HEK293 (cell line): ENCODE measurements at regions of chr2 and their contacts with region 1.

Region 1: DNA sequence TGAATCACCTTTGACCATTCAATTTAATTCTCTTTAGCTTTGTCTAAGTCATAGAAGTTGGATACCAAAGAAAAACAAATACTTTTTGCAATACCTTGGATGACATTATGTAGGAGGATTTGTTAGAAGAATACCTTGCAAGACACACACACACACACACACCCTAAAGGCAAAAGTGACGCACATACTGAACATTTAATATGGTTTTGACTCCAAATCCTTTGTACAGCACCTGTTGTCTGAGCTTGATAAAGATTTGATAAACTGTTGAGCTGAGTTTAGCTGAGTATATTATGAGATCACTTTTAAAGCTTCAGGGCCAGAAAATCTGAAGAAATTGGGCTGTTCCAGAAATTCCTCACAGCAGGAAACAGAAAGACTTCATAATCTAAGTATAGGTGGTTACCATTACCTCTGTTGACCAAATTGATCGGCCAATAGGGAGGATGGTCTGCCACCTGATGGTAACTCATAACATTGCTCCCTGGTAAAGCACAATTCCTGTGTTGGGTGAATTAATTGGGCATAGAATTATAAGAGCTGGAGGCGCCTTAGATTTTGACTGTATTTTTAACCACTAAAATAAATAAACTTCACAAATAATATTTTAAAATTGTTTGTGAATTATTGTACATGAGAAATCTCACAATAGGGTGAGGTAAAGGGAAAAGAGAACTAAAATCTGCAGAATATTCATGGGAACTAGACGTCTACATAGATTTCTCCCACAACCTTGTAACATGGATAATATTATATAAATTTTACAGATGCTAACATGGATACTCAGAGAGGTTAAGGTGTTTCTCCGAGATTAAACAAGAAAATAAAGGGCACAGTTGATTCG is 21.9 kb upstream of the RPIA start:
- H3K4me3 ChIP-seq: no peak overlapping the region
- H3K27ac ChIP-seq: no peak overlapping the region
- H3K4me1 ChIP-seq: no peaks in the 10 kb centered on the region
- CTCF ChIP-seq: peak; percentile 27; the same call in 1 of the 2 replicates

Region 2: DNA sequence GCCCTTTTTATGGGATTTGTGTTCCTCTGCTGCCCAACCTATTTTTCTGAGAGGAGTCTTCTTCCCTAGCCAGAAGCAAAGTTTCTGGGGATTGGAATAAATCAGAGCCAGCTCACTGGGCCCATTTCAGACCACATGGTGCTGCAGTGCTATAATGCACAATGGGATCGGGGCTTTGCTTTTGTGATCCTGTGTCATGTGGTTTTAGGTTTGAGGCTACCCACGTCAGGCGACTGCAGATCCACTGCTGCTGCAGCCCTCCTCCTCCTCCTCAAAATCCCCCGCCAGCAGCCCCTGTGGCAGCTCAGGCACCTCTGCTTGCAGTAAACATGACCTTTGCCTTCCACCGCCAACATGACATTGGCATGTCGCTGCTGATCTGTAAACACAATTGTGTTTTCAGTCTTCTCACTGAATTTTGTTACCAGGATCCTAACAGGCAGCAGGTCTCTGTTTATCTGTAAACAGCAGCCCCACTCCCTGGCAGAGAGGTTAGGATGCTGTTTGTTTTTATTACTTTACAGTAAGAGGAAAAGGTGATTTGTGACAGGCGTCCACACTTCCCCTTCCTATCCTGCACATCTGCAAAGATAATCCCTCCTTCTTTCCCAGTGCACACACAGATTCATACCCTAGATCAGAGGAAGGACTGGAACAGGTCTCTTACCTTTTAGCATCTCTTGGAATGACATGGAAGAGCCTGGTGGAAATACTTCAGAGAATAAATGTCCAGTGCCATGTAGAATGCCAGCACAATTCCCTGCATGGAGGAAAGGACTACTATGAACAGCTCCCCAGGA is 347.9 kb before region 1 on chr2:
- CTCF ChIA-PET with region 1: no interaction called
- POLR2A ChIA-PET with region 1: no interaction called
- H3K4me3 ChIP-seq: no peak overlapping the region
- H3K27ac ChIP-seq: no peak overlapping the region
- H3K4me1 ChIP-seq: no peaks in the 10 kb centered on the region
- CTCF ChIP-seq: no peak

Region 3: GRCh38 chr2:88429929-88430328 is 239.7 kb before region 1 on chr2:
- CTCF ChIA-PET with region 1: no interaction called
- POLR2A ChIA-PET with region 1: no interaction called
- H3K4me3 ChIP-seq: no peak overlapping the region
- H3K27ac ChIP-seq: no peak overlapping the region
- H3K4me1 ChIP-seq: no peaks in the 10 kb centered on the region
- CTCF ChIP-seq: no peak

Region 4: DNA sequence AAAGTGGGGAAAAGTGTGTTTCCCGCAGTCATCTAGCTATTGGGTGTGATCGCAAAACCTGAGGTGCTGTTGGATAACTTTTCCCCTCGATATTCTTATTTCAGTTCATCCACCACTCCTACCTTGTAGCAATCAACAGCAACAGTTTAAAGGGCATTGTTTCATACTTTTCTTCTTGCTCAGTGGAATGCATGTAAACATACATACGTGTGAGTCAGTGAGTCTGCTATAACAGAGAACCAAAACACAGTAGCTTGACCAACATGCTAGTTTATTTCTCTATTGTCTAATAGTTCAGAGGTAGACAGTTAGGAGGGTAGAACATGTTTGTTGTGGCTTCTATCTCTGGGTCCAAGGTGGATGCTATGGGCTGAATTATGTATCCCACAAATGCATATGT is 139.5 kb before region 1 on chr2:
- CTCF ChIA-PET with region 1: no interaction called
- POLR2A ChIA-PET with region 1: no interaction called
- H3K4me3 ChIP-seq: no peak overlapping the region
- H3K27ac ChIP-seq: no peak overlapping the region
- H3K4me1 ChIP-seq: no peaks in the 10 kb centered on the region
- CTCF ChIP-seq: no peak

Region 5: GRCh38 chr2:88580088-88580487 is 89.5 kb before region 1 on chr2:
- CTCF ChIA-PET with region 1: interaction called, 15 read pairs
- POLR2A ChIA-PET with region 1: no interaction called
- H3K4me3 ChIP-seq: no peak overlapping the region
- H3K27ac ChIP-seq: no peak overlapping the region
- H3K4me1 ChIP-seq: no peaks in the 10 kb centered on the region
- CTCF ChIP-seq: no peak

Region 6: DNA sequence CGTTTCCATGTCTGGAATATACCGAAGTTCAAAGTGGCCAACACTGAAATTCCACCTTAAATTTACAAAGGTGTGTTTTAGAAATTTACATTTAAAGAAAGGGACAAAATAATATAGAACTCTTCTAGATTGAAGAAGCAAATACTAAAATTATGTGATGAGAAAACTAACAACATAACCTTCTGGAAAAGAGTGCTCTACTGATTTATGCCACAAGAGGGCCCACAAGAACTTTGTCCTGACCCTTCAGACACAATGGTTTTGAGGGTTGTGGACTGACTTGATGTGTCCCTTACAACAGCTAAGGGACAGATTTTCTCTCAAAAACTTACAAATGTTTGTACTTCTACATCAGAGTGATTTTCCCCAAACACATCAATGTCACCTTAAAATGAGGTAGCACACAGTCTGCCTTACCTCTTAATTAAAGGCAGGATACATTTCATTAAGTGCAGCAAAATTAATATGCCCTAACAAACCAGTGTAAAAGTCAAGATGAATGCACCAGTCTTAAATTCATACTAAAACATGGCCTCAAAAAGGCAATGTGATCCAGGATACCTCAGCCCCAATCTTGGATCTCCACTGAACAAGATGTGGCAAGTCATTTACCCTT is 78.5 kb before region 1 on chr2:
- CTCF ChIA-PET with region 1: interaction called, 220 read pairs
- POLR2A ChIA-PET with region 1: no interaction called
- H3K4me3 ChIP-seq: no peak overlapping the region
- H3K27ac ChIP-seq: no peak overlapping the region
- H3K4me1 ChIP-seq: no peaks in the 10 kb centered on the region
- CTCF ChIP-seq: 0 out of 2 replicates have a peak, but pooled peaks have one; percentile 11

Region 7: GRCh38 chr2:88659538-88659916 is 10.1 kb before region 1 on chr2:
- CTCF ChIA-PET with region 1: interaction called, 24 read pairs
- POLR2A ChIA-PET with region 1: interaction called, 3 read pairs
- H3K4me3 ChIP-seq: no peak overlapping the region
- H3K27ac ChIP-seq: peak overlapping the region; percentile 45
- H3K4me1 ChIP-seq: peaks cover 3% of the 10 kb centered on the region; the same call in 1 of the 2 replicates
- CTCF ChIP-seq: no peak

Region 8: GRCh38 chr2:88691339-88692183 is 22.0 kb after region 1 on chr2 and contains the start of gene RPIA:
- CTCF ChIA-PET with region 1: interaction called, 10 read pairs
- POLR2A ChIA-PET with region 1: no interaction called
- H3K4me3 ChIP-seq: peak within 1 kb of the TSS; percentile 80
- H3K27ac ChIP-seq: peak within 1 kb of the TSS; percentile 38
- H3K4me1 ChIP-seq: no peaks in the 10 kb centered on the region
- CTCF ChIP-seq: peak; percentile 90